ENCODE measurements at regions of chr4 and their contacts with region 1.

Region 1: GRCh38 chr4:76689241-76689817 is 208.6 kb downstream of the SOWAHB start:
- DNase-seq: peak; percentile 68
- H3K4me3 ChIP-seq: peak overlapping the region; percentile 69 to 95 (median 77)
- H3K27ac ChIP-seq: peak overlapping the region; percentile 91
- H3K4me1 ChIP-seq: peaks cover 42% of the 10 kb centered on the region
- H3K27me3 ChIP-seq: no peaks in the 10 kb centered on the region
- CTCF ChIP-seq: no peak

Region 2: GRCh38 chr4:76546282-76547171 is 142.8 kb before region 1 on chr4:
- CTCF ChIA-PET with region 1: no interaction called
- dilution Hi-C with region 1: no loop called
- in situ Hi-C with region 1: no loop called
- intact Hi-C with region 1: no loop called
- DNase-seq: peak; percentile 72
- H3K4me3 ChIP-seq: no peak overlapping the region
- H3K27ac ChIP-seq: peak overlapping the region; percentile 66
- H3K4me1 ChIP-seq: peaks cover 22% of the 10 kb centered on the region
- H3K27me3 ChIP-seq: no peaks in the 10 kb centered on the region
- CTCF ChIP-seq: no peak

Region 3: GRCh38 chr4:76634239-76634638 is 55.1 kb before region 1 on chr4:
- CTCF ChIA-PET with region 1: no interaction called
- dilution Hi-C with region 1: no loop called
- in situ Hi-C with region 1: no loop called
- intact Hi-C with region 1: loop called (anchors 2 kb)
- DNase-seq: peak; percentile 56
- H3K4me3 ChIP-seq: no peak overlapping the region
- H3K27ac ChIP-seq: peak overlapping the region; percentile 54
- H3K4me1 ChIP-seq: peaks cover 41% of the 10 kb centered on the region
- H3K27me3 ChIP-seq: no peaks in the 10 kb centered on the region
- CTCF ChIP-seq: no peak

Region 4: DNA sequence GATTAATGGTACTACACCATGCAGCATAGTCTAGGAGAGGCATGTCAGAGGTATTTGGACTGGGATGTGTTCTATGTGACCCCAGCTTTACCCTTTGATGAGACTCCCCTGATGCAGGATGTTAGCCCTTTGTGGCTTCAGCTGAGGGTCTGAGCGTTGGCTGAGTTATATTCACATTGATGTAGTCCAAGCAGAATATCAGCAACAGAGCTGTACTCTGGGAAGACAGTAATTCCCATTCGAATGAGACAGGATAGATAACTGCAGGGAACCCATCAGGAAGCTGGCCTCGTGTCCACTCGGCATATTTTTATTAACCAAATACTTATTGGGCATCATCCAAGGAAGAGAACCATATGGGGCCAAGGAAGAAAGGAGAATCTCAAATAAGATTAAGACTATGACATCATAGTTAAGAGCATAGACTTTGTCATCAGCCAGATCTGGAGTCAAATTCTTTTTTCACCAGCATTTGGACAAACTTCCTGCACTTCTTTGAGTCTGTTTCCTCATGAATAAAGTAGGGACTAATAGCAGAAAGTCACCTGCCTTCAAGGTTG is 10.5 kb after region 1 on chr4:
- CTCF ChIA-PET with region 1: no interaction called
- dilution Hi-C with region 1: no loop called
- in situ Hi-C with region 1: no loop called
- intact Hi-C with region 1: loop called (anchors 1 kb)
- DNase-seq: no peak
- H3K4me3 ChIP-seq: no peak overlapping the region
- H3K27ac ChIP-seq: no peak overlapping the region
- H3K4me1 ChIP-seq: peaks cover 46% of the 10 kb centered on the region
- H3K27me3 ChIP-seq: no peaks in the 10 kb centered on the region
- CTCF ChIP-seq: no peak

Region 5: DNA sequence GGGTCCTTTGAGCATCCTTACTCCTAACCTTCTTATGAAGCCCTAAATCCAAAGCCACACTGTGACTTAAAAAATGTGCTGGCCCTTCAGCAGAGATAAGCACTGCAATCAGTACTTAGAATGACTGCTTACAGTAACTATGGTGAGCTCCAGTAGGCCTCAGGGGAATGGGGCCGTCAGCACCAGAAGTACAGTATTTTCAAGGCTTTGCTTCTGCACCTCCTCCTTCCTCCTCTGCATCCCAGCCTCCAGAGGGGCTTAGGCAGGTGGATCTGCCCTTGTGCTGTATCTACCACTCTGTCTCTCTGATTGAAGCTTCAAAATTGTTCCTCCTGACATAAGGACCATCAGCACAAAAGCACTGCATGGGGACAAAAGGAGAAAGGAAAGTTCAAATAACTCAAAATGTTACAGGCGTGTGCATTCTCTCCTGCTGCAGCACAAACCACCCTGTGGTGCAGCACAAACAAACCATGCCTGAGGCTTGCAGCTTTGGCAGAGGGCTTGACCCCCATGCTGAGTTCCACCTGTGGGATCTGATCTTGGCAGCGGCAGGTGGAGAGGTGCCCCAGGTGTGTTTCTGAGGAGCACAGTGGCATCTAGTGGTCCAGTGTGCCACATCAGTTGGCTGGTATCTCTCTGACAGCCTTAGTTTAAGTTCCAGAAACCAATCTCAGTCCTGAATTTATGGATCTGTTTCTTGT is 43.9 kb after region 1 on chr4:
- CTCF ChIA-PET with region 1: no interaction called
- dilution Hi-C with region 1: loop called (anchors 5 kb)
- in situ Hi-C with region 1: no loop called
- intact Hi-C with region 1: loop called (anchors 2 kb)
- DNase-seq: peak; percentile 34
- H3K4me3 ChIP-seq: no peak overlapping the region
- H3K27ac ChIP-seq: no peak overlapping the region
- H3K4me1 ChIP-seq: peaks cover 4% of the 10 kb centered on the region
- H3K27me3 ChIP-seq: no peaks in the 10 kb centered on the region
- CTCF ChIP-seq: peak; percentile 29 to 50

Measured in mammary epithelial cell (primary cell).